ENCODE measurements at regions of chr11 and their contacts with region 1.

Region 1: DNA sequence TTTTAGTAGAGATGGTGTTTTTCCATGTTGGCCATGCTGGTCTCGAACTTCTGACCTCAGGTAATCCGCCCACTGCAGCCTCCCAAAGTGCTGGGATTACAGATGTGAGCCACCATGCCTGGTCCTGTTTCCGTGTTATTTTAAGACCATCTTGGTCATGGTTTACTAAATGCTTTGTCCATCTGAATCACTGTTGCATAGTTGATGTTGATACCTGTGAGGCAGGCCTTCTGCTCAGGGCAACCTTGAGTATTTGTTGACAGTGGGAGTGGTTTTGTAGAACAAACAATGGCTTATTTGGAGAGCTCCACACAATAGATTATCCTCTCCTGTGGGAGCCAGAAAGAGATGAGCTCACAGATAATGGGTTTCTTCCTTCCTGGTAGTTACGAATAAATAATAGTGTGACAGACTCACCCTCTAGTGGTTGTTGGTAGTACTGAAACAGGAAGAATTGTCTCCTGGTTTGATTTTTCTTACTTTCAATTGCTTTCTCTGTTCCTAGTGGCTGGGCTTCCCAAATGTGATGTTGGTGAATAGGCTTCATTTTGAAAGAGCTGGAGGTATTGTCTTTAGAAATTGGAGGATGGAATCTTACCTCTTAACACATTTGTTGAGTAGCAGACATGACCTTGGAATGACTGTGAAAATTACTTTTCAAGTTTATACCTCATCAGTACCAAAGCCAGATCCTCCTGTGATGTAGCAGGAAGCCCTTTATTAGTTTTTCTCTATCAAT is 39.0 kb downstream of the CTNND1 start:
- DNase-seq: peak; percentile 51
- ATAC-seq: peak; percentile 36
- H3K4me3 ChIP-seq: no peak overlapping the region
- H3K27ac ChIP-seq: peak overlapping the region; percentile 82; the same call in 1 of the 2 replicates
- H3K4me1 ChIP-seq: peaks cover 27 to 39% of the 10 kb centered on the region in 2 experiments
- H3K27me3 ChIP-seq: no peaks in the 10 kb centered on the region
- CTCF ChIP-seq: peak; percentile 74 to 86 (median 85); a peak in 5 of 6 replicates
- POLR2A ChIP-seq: no peak
- RAD21 ChIP-seq: peak; percentile 93

Region 2: GRCh38 chr11:57656885-57657193 is 143.8 kb before region 1 on chr11:
- CTCF ChIA-PET with region 1: no interaction called
- POLR2A ChIA-PET with region 1: no interaction called
- RAD21 ChIA-PET with region 1: no interaction called
- intact Hi-C with region 1: no loop called
- DNase-seq: no peak
- ATAC-seq: no peak
- H3K4me3 ChIP-seq: peak overlapping the region; percentile 83 to 97
- H3K27ac ChIP-seq: peak overlapping the region; percentile 35; the same call in 1 of the 2 replicates
- H3K4me1 ChIP-seq: peaks cover 7 to 11% of the 10 kb centered on the region in 2 experiments; a peak in 3 of 4 replicates
- H3K27me3 ChIP-seq: no peaks in the 10 kb centered on the region
- CTCF ChIP-seq: no peak
- POLR2A ChIP-seq: no peak
- RAD21 ChIP-seq: no peak

Region 3: DNA sequence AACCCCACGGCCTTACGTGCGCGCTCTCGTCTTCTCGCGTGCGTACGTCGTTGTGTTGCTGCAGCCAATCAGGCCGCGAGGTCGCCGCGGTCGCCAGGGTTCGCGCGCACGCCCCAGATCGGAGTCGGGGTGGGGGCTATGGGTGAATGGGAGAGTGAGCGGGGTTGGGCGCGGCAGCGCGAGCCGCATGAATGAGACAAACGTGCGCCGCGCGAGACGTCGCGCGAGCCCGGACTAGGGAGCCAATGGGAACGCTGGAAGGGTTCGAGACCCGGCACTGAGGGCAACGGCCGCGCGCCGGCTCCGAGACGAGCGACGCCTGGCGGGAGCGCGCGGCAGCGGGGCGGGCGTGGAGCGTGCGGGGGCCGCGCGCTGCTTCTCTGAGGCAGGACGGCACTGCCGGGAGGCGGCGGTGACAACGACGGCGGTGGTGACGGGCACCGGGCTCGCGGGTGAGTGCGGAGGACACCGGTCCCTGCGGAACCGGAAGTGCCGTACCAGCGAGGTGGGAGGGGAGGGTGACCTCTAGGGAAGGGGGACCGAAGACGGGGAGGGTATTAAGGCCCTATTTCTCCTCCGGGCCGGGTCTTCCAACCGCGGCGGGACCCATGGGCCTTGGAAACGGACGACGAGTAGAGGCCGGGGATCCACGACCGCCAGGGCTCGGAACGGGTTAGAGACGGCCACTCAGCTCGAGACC is 132.7 kb before region 1 on chr11 and contains the start of gene ZDHHC5:
- CTCF ChIA-PET with region 1: interaction called, 3 read pairs
- POLR2A ChIA-PET with region 1: no interaction called
- RAD21 ChIA-PET with region 1: no interaction called
- intact Hi-C with region 1: loop called (anchors 5 kb)
- DNase-seq: peak; percentile 99
- ATAC-seq: peak; percentile 90
- H3K4me3 ChIP-seq: peak within 1 kb of the TSS; percentile 85 to 97
- H3K27ac ChIP-seq: peak within 1 kb of the TSS; percentile 93
- H3K4me1 ChIP-seq: peaks cover 9 to 19% of the 10 kb centered on the region in 2 experiments
- H3K27me3 ChIP-seq: no peaks in the 10 kb centered on the region
- CTCF ChIP-seq: peak in 2 of 3 experiments; percentile 39 to 41; a peak in 3 of 6 replicates
- POLR2A ChIP-seq: peak; percentile 58
- RAD21 ChIP-seq: no peak
- total RNA-seq, gene ZDHHC5: 64.1 TPM

Region 4: DNA sequence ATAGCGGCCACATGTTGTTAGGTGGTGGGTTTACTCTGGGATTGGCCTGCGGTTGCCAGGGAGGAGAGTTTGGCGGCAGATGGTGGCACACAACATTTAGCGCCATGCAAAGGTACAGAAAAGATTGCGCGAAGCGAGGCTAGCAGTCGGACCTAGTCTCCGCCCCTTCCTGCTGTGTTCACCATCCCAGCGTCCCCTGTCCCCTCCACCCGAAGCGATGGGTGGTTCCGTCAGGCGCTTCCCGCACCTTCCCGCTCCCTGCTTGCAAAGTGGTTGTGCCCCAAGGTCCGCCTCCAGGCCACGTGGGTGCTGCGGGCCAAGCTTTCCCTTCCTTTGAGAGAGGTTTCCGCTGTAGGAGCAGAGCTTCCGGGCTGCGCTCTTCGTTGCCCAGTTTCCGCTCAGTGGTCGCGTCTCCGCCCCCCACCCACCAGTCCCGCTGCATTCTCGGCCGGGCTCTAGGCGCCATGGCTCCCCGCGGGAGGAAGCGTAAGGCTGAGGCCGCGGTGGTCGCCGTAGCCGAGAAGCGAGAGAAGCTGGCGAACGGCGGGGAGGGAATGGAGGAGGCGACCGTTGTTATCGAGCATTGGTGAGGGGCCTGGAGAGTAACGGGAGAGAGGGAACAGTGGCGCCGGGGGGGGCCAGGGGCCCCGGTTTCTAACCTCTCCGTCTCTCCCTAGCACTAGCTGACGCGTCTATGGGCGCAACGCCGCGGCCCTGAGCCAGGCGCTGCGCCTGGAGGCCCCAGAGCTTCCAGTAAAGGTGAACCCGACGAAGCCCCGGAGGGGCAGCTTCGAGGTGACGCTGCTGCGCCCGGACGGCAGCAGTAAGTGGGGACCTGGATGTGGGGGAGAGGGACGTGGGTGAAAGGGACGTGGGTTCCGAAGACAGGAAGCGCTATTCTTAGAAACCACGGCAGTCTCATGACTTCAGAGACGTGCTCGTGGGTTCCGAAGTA is 59.2 kb before region 1 on chr11 and contains the start of gene SELENOH:
- CTCF ChIA-PET with region 1: interaction called, 5 read pairs
- POLR2A ChIA-PET with region 1: interaction called, 10 read pairs
- RAD21 ChIA-PET with region 1: interaction called, 3 to 4 read pairs
- intact Hi-C with region 1: no loop called
- DNase-seq: peak; percentile 94
- ATAC-seq: peak; percentile 95
- H3K4me3 ChIP-seq: peak within 1 kb of the TSS; percentile 95 to 97
- H3K27ac ChIP-seq: peak within 1 kb of the TSS; percentile 76
- H3K4me1 ChIP-seq: peaks cover 0 to 17% of the 10 kb centered on the region in 2 experiments; a peak in 2 of 4 replicates
- H3K27me3 ChIP-seq: no peaks in the 10 kb centered on the region
- CTCF ChIP-seq: no peak
- POLR2A ChIP-seq: peak; percentile 62
- RAD21 ChIP-seq: no peak
- total RNA-seq, gene SELENOH: 194 TPM

Region 5: GRCh38 chr11:57751676-57752253 is 48.8 kb before region 1 on chr11 and contains the start of gene BTBD18:
- CTCF ChIA-PET with region 1: interaction called, 95 read pairs
- POLR2A ChIA-PET with region 1: interaction called, 12 read pairs
- RAD21 ChIA-PET with region 1: interaction called, 13 to 19 read pairs
- intact Hi-C with region 1: loop called (anchors 1 kb)
- DNase-seq: no peak
- ATAC-seq: peak; percentile 89
- H3K4me3 ChIP-seq: no peak within 1 kb of the TSS
- H3K27ac ChIP-seq: no peak within 1 kb of the TSS
- H3K4me1 ChIP-seq: peaks cover 0 to 12% of the 10 kb centered on the region in 2 experiments; a peak in 1 of 4 replicates
- H3K27me3 ChIP-seq: no peaks in the 10 kb centered on the region
- CTCF ChIP-seq: peak; percentile 65 to 69 (median 68)
- POLR2A ChIP-seq: no peak
- RAD21 ChIP-seq: peak; percentile 77
- total RNA-seq, gene BTBD18: not detected

Region 6: GRCh38 chr11:57761301-57762234 is 39.0 kb before region 1 on chr11 and contains the start of gene CTNND1:
- CTCF ChIA-PET with region 1: interaction called, 47 read pairs
- POLR2A ChIA-PET with region 1: interaction called, 31 read pairs
- RAD21 ChIA-PET with region 1: interaction called, 5 read pairs
- intact Hi-C with region 1: loop called (anchors 1 kb)
- DNase-seq: peak; percentile 95
- ATAC-seq: peak; percentile 97
- H3K4me3 ChIP-seq: peak within 1 kb of the TSS; percentile 81 to 93
- H3K27ac ChIP-seq: peak within 1 kb of the TSS; percentile 83
- H3K4me1 ChIP-seq: peaks cover 15 to 28% of the 10 kb centered on the region in 2 experiments; a peak in 3 of 4 replicates
- H3K27me3 ChIP-seq: no peaks in the 10 kb centered on the region
- CTCF ChIP-seq: 0 out of 6 replicates have a peak, but pooled peaks of 1 of the 3 experiments have one; percentile 3
- POLR2A ChIP-seq: peak; percentile 78
- RAD21 ChIP-seq: peak; percentile 15
- total RNA-seq, gene CTNND1: 157 TPM

Region 7: DNA sequence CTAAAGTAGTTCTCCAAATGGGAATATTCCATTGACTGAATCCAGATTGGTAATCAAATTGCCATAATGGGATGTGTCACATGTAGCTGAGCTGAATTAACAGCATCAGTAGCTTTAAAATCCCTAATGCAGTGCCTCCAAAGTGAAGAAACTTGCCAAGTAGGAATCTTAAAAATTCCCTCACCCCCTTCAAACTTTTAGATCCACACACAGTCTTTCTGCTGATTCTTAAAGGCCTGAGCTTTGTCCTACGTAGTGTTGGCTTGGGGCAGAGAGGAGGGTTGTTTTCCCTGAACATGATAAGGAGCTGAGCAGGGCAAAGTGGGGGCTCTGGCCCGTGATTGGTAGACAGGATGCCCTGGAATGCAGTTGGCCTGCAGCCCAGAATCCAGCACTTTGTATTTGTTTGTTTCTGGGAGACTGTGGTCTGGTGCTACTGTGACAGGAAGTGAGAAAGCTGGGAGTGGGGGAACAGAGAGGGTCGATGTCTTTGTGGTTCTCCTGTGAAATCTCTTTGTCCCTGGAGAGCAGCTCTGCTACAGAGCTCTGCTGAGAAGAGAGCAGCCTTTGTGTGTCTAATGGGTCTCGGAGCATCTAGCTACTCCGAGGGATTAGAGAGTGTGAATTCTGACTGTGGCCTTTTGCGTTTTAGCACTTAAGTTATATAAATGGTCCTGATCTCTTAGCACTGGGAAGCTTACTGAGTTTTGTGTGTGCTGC is 22.1 kb before region 1 on chr11:
- CTCF ChIA-PET with region 1: interaction called, 30 read pairs
- POLR2A ChIA-PET with region 1: interaction called, 16 read pairs
- RAD21 ChIA-PET with region 1: interaction called, 3 to 4 read pairs
- intact Hi-C with region 1: loop called (anchors 1 kb)
- DNase-seq: peak; percentile 89
- ATAC-seq: peak; percentile 81
- H3K4me3 ChIP-seq: peak overlapping the region; percentile 28 to 49
- H3K27ac ChIP-seq: peak overlapping the region; percentile 89
- H3K4me1 ChIP-seq: peaks cover 88 to 98% of the 10 kb centered on the region in 2 experiments
- H3K27me3 ChIP-seq: no peaks in the 10 kb centered on the region
- CTCF ChIP-seq: no peak
- POLR2A ChIP-seq: no peak
- RAD21 ChIP-seq: 0 out of 2 replicates have a peak, but pooled peaks have one; percentile 7

Measured in HCT116 (cell line).